CD8-positive, alpha-beta T cell (primary cell): ENCODE measurements at regions of chr5 and their contacts with region 1.

Region 1: GRCh38 chr5:53095931-53096525 is 13.5 kb downstream of the MOCS2 start:
- DNase-seq: peak; percentile 43 to 76 (median 68)
- ATAC-seq: peak; percentile 93
- H3K4me3 ChIP-seq: no peak overlapping the region
- H3K4me3 Mint-ChIP-seq: no peak overlapping the region
- H3K27ac ChIP-seq: no peak overlapping the region
- H3K27ac Mint-ChIP-seq: no peak overlapping the region
- H3K4me1 ChIP-seq: no peaks in the 10 kb centered on the region
- H3K4me1 Mint-ChIP-seq: no peaks in the 10 kb centered on the region
- H3K27me3 ChIP-seq: no peaks in the 10 kb centered on the region
- H3K27me3 Mint-ChIP-seq: no peaks in the 10 kb centered on the region
- CTCF ChIP-seq: peak; percentile 81

Region 2: DNA sequence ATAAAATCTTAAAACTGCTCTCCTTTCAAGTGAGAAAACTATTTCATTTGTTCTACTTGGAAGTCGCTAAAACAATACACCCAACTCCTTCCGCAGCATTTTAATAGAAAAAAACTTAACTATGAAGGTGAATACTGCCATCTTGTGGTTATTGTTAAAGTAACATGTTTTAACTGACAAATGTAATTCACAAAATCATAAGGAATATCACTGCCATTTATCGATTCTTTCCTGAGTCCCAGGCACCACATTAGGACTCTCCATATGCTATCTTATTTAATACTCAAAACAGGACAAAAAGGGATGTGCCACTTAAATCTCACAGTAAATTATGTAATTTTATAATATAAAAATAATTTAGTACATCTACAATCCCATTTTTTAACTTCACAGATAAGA is 438.8 kb before region 1 on chr5:
- CTCF ChIA-PET with region 1: no interaction called
- POLR2A ChIA-PET with region 1: no interaction called
- intact Hi-C with region 1: loop called in 1 of 2 experiments (anchors 10 kb)
- DNase-seq: peak in 2 of 9 experiments; percentile 46 to 64
- ATAC-seq: no peak
- H3K4me3 ChIP-seq: no peak overlapping the region
- H3K4me3 Mint-ChIP-seq: no peak overlapping the region
- H3K27ac ChIP-seq: no peak overlapping the region
- H3K27ac Mint-ChIP-seq: no peak overlapping the region
- H3K4me1 ChIP-seq: peaks cover 3% of the 10 kb centered on the region
- H3K4me1 Mint-ChIP-seq: peaks cover 4% of the 10 kb centered on the region
- H3K27me3 ChIP-seq: no peaks in the 10 kb centered on the region
- H3K27me3 Mint-ChIP-seq: peaks cover 8% of the 10 kb centered on the region
- CTCF ChIP-seq: peak; percentile 73

Region 3: DNA sequence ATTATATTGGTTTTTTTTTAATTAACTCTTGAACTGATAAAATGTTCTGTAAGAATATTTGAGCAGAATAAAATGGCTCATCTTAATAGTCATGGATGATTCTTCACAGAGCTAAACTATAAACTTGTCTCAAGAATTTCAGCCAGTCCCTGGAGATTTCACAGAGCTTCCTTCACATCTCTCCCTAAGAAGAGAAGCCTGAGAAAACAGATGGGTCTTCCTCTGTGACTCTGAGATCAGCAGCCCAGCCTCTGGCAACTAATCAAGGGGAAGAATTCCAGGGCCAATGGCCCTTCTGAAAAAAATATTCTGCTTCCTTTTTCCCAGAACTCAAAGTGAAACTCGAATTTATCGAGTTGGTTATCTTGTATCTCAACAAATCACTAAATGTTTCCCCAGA is 430.5 kb before region 1 on chr5:
- CTCF ChIA-PET with region 1: no interaction called
- POLR2A ChIA-PET with region 1: no interaction called
- intact Hi-C with region 1: loop called in 1 of 2 experiments (anchors 5 kb)
- DNase-seq: no peak
- ATAC-seq: no peak
- H3K4me3 ChIP-seq: no peak overlapping the region
- H3K4me3 Mint-ChIP-seq: no peak overlapping the region
- H3K27ac ChIP-seq: no peak overlapping the region
- H3K27ac Mint-ChIP-seq: no peak overlapping the region
- H3K4me1 ChIP-seq: no peaks in the 10 kb centered on the region
- H3K4me1 Mint-ChIP-seq: peaks cover 2% of the 10 kb centered on the region
- H3K27me3 ChIP-seq: no peaks in the 10 kb centered on the region
- H3K27me3 Mint-ChIP-seq: no peaks in the 10 kb centered on the region
- CTCF ChIP-seq: no peak

Region 4: DNA sequence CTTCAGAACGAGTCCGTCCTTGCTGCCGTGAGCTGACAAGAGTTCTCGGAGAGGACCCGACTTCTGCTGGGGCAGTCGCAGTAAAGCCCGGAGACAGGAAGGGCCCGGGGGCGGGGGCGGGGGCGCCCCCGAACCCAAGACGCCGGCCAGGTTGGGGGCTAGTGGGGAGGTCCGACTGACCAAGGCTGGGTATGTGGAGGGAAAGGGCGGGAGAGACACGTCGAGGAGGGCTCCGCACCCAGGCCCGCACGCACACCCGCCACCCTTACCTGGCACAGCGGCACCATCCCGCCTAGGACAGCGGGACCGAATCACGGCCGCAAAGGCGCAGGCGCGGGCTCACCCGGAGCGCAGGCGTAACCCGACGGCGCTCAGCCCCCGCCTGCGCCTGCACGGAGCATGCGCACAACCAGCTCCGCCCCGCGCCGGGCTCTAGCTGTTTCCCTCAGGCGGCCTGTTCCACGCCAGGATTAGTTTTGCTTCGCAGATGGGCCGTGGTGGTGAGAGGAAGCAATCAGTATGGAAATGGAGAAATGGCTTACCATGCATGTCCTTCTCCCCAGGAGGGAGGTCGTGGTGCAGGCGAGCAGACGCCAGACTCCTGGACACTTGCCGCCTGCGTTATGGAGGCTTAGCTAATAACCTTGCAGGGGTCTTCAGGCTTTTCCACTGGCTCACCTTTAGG is 13.6 kb after region 1 on chr5 and contains the start of gene MOCS2:
- CTCF ChIA-PET with region 1: interaction called, 7 read pairs
- POLR2A ChIA-PET with region 1: interaction called, 3 read pairs
- intact Hi-C with region 1: loop called in 1 of 2 experiments (anchors 2 kb)
- DNase-seq: peak; percentile 73 to 95 (median 90)
- ATAC-seq: peak; percentile 97
- H3K4me3 ChIP-seq: peak within 1 kb of the TSS; percentile 59 to 85
- H3K4me3 Mint-ChIP-seq: peak within 1 kb of the TSS; percentile 96
- H3K27ac ChIP-seq: peak within 1 kb of the TSS; percentile 62 to 75
- H3K27ac Mint-ChIP-seq: peak within 1 kb of the TSS; percentile 93
- H3K4me1 ChIP-seq: peaks cover 34% of the 10 kb centered on the region
- H3K4me1 Mint-ChIP-seq: peaks cover 55% of the 10 kb centered on the region
- H3K27me3 ChIP-seq: no peaks in the 10 kb centered on the region
- H3K27me3 Mint-ChIP-seq: no peaks in the 10 kb centered on the region
- CTCF ChIP-seq: no peak
- total RNA-seq, gene MOCS2: 16.5 to 18.2 TPM

Region 5: DNA sequence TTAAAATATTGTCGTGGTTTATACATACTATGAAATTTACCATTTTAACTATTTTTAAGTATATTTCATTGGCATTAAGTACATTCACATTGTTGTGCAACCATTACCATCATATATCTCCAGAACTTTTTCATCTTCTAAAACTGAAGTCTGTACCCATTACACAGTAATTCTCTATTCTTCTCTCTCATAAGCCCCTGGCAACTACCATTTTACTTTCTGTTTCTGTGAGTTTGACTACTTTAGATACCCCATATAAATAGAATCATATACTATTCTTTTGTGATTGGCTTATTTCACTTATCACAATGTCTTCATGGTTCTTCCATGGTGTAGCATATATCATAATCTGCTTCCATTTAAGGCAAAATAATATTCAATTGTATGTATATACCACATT is 494.7 kb after region 1 on chr5:
- CTCF ChIA-PET with region 1: no interaction called
- POLR2A ChIA-PET with region 1: no interaction called
- intact Hi-C with region 1: no loop called
- DNase-seq: no peak
- ATAC-seq: no peak
- H3K4me3 ChIP-seq: no peak overlapping the region
- H3K4me3 Mint-ChIP-seq: no peak overlapping the region
- H3K27ac ChIP-seq: no peak overlapping the region
- H3K27ac Mint-ChIP-seq: no peak overlapping the region
- H3K4me1 ChIP-seq: peaks cover 14% of the 10 kb centered on the region
- H3K4me1 Mint-ChIP-seq: peaks cover 74% of the 10 kb centered on the region
- H3K27me3 ChIP-seq: no peaks in the 10 kb centered on the region
- H3K27me3 Mint-ChIP-seq: no peaks in the 10 kb centered on the region
- CTCF ChIP-seq: no peak